Cardiac septum (tissue), 1 donor: ENCODE measurements at regions of chr17 and their contacts with region 1.

Region 1: DNA sequence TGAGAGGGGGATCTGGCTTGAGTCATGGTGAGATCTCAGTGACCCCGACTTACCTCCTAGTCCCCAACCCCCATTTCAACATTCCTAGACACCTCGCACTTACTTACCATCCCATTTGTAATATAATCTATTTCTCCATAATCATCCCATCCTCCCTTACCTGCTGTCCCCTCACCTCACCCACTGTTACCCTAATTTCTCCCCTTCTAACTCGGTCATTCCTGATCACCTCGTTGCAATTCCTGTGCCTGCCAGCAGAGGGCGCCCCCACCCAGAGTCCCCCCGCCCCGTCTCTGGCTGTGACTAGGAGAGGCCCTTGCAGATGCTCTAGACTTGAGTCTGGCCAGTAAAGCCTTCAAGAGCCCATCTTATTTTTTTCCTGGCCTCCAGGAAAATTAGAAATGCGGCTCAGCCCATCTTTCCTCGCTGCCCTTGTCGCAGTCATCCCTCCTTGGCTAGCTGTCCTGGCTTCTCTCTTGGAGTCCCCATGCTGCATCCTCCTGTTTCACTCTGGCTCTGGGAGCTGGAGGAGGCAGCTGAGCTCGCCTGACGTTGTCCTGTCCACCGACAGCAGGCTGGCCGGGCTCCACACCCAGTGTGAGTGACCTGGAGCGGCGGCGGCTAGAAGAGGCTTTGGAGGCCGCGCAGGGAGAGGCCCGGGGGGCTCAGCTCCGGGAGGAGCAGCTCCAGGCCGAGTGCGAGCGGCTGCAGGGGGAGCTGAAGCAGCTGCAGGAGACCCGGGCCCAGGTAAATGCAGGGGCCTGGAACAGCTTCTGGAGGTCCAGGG is 5.0 kb downstream of the TBKBP1 start:
- DNase-seq: peak; percentile 88

Region 2: DNA sequence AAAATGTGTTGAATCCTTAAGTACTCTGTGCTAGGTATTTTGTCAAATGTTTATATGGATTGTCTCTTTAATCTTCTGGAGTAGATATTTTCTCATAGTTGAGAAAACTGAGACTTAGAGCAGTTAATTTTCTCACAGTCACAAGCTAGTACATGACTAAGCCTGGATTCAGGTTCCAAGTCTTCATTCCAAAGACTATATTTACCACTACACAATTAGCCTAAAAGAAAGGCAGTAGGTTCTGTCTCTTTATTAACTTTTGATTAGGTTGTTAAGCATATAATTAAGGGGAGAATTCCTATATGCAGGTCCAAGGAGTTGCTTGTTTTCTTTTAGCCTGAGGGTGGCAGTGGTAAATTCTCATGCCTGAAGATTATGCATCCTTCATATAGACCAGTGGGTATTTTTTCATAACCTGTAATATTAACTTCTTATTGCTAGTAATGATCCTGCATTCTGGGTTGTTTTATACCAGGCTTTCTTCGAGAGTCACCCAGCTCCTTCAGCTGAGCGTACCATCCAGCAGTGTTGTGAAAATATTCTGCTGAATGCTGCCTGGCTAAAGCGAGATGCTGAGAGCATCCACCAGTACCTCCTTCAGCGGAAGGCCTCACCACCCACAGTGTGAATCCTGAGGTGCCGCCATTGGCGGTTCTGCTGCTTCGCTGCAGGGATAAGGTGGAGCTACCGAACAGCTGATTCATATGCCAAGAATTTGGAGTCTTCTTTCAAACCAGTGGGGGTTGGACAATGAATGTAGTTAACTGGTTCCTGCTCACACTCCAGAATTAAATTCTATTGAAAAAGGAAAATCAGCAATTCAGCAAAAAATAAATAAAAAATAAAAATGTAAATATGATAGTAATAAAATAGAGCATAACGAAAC is 77.4 kb before region 1 on chr17:
- intact Hi-C with region 1: no loop called
- DNase-seq: peak; percentile 76

Region 3: GRCh38 chr17:47650525-47651522 is 48.1 kb before region 1 on chr17:
- intact Hi-C with region 1: loop called (anchors 5 kb)
- DNase-seq: peak; percentile 98

Region 4: GRCh38 chr17:47802341-47803022 is 103.5 kb after region 1 on chr17:
- intact Hi-C with region 1: loop called (anchors 5 kb)
- DNase-seq: no peak

Region 5: GRCh38 chr17:47895856-47896671 is 197.1 kb after region 1 on chr17 and contains the start of gene SP2:
- intact Hi-C with region 1: loop called (anchors 10 kb)
- DNase-seq: peak; percentile 98
- total RNA-seq, gene SP2: 16.3 TPM